CD4-positive, alpha-beta T cell (primary cell): ENCODE measurements at regions of chr10 and their contacts with region 1.

Region 1: GRCh38 chr10:47223236-47223635 is 76.8 kb upstream of the GDF10 start:
- DNase-seq: no peak
- ATAC-seq: no peak
- H3K4me3 ChIP-seq: no peak overlapping the region
- H3K4me3 Mint-ChIP-seq: no peak overlapping the region
- H3K27ac ChIP-seq: no peak overlapping the region
- H3K27ac Mint-ChIP-seq: no peak overlapping the region
- H3K4me1 ChIP-seq: no peaks in the 10 kb centered on the region
- H3K4me1 Mint-ChIP-seq: peaks cover 9% of the 10 kb centered on the region
- H3K27me3 ChIP-seq: no peaks in the 10 kb centered on the region
- H3K27me3 Mint-ChIP-seq: no peaks in the 10 kb centered on the region
- CTCF ChIP-seq: no peak

Region 2: DNA sequence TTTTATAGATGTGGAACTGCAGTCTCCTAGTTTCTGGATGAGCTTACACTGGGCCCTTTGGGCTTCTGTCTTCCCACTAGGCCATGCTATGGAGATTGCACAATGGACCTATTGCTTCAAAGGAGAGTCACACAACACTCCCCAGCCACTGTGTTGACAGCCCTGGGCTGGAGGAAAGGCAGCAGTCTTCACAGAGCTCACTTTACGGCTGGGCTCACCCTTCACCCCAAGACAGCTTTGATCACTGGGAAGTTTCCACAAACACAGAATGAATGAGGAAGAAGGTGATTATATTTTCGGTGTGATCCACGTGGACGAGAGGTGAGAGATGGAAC is 16.0 kb before region 1 on chr10:
- CTCF ChIA-PET with region 1: no interaction called
- POLR2A ChIA-PET with region 1: no interaction called
- intact Hi-C with region 1: no loop called
- DNase-seq: peak in 5 of 14 experiments; percentile 9 to 52 (median 42)
- ATAC-seq: peak; percentile 57
- H3K4me3 ChIP-seq: peak overlapping the region; percentile 28
- H3K4me3 Mint-ChIP-seq: peak overlapping the region; percentile 65
- H3K27ac ChIP-seq: peak overlapping the region; percentile 60 to 74
- H3K27ac Mint-ChIP-seq: peak overlapping the region; percentile 82
- H3K4me1 ChIP-seq: peaks cover 46% of the 10 kb centered on the region
- H3K4me1 Mint-ChIP-seq: peaks cover 70% of the 10 kb centered on the region
- H3K27me3 ChIP-seq: no peaks in the 10 kb centered on the region
- H3K27me3 Mint-ChIP-seq: no peaks in the 10 kb centered on the region
- CTCF ChIP-seq: no peak

Region 3: DNA sequence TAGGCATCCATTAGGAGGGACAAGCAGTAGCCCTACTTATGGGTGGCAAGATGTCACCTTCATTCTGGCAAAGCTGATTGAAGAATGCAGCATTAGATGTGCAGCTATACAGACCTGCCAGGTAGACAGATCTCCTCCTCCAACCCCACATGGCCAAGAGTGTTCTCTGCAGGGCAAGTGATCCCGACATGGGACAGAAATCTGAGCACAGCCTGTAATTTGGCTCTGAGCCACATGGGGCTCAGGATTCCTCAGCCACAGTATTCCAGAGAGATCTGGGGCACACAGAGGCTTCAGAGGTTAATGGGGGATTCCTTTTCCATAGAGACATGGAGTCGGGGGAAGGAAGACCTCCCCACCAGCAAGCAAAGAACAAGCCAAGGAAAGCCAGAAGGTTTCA is 18.0 kb after region 1 on chr10:
- CTCF ChIA-PET with region 1: no interaction called
- POLR2A ChIA-PET with region 1: no interaction called
- intact Hi-C with region 1: loop called in 1 of 2 experiments (anchors 1 kb)
- DNase-seq: no peak
- ATAC-seq: no peak
- H3K4me3 ChIP-seq: no peak overlapping the region
- H3K4me3 Mint-ChIP-seq: no peak overlapping the region
- H3K27ac ChIP-seq: no peak overlapping the region
- H3K27ac Mint-ChIP-seq: no peak overlapping the region
- H3K4me1 ChIP-seq: peaks cover 6% of the 10 kb centered on the region
- H3K4me1 Mint-ChIP-seq: peaks cover 11% of the 10 kb centered on the region
- H3K27me3 ChIP-seq: no peaks in the 10 kb centered on the region
- H3K27me3 Mint-ChIP-seq: no peaks in the 10 kb centered on the region
- CTCF ChIP-seq: no peak